Activated B cell treated with CpG ODN at 0.5 μM for 24 hours (primary cell): ENCODE measurements at regions of chr14 and their contacts with region 1.

Region 1: DNA sequence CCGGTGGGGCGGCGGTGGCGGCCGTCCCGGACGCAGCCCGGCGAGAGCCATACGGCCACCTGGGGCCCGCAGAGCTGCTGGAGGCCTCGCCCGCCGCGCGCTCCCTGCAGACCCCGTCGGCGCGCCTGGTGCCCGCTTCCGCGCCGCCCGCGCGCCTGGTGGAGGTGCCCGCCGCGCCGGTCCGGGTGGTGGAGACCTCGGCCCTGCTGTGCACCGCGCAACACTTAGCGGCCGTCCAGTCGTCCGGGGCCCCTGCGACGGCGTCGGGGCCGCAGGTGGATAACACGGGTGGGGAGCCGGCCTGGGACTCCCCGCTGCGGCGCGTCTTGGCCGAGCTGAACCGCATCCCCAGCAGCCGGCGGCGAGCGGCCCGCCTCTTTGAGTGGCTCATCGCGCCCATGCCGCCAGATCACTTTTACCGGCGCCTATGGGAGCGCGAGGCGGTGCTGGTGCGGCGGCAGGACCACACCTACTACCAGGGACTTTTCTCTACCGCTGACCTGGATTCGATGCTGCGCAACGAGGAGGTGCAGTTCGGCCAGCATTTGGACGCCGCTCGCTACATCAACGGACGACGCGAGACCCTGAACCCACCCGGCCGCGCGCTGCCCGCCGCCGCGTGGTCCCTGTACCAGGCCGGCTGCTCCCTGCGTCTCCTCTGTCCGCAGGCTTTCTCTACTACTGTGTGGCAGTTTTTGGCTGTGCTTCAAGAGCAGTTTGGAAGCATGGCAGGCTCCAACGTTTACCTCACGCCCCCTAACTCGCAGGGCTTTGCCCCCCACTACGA is 716 bp downstream of the RIOX1 start:
- DNase-seq: no peak
- ATAC-seq: peak; percentile 51
- H3K4me3 Mint-ChIP-seq: peak overlapping the region; percentile 88
- H3K27ac Mint-ChIP-seq: peak overlapping the region; percentile 80
- H3K4me1 Mint-ChIP-seq: peaks cover 49% of the 10 kb centered on the region
- H3K27me3 Mint-ChIP-seq: no peaks in the 10 kb centered on the region
- CTCF ChIP-seq: no peak

Region 2: DNA sequence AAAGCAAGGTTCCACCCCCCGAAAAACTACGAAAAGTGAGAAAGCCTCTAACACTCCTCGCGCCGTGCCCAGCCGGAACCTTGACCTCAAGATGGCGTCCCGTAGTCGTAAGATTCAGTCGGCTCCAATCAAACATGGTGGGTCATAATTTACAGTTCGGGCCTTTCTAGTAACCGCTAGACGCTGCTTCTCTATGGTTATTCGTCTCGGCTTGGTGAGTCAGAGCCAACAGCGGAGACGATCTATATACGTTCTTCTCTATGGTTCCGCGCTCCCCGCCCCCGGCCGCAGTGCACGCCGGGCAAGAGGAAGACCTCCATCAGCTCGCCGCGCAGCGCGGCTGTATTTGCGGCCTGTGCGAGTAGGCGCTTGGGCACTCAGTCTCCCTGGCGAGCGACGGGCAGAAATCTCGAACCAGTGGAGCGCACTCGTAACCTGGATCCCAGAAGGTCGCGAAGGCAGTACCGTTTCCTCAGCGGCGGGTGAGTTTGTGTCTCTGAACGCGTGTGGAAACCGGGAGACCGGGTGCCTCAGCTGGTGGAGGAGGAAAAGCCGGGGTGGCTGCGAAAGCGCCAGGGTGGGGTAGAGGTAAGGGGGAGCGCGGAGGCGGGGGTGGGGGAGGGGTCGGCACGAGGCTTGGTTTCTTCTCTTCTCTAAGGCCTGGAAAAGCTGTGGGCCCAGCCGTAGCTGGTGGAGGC is 433.1 kb before region 1 on chr14 and contains the start of gene RBM25:
- CTCF ChIA-PET with region 1: no interaction called
- POLR2A ChIA-PET with region 1: interaction called, 9 read pairs
- intact Hi-C with region 1: loop called (anchors 2 kb)
- DNase-seq: peak; percentile 90
- ATAC-seq: peak; percentile 93
- H3K4me3 Mint-ChIP-seq: no peak within 1 kb of the TSS
- H3K27ac Mint-ChIP-seq: no peak within 1 kb of the TSS
- H3K4me1 Mint-ChIP-seq: peaks cover 42% of the 10 kb centered on the region
- H3K27me3 Mint-ChIP-seq: no peaks in the 10 kb centered on the region
- CTCF ChIP-seq: no peak
- total RNA-seq, gene RBM25: 114 and 123 TPM in 2 replicates

Region 3: DNA sequence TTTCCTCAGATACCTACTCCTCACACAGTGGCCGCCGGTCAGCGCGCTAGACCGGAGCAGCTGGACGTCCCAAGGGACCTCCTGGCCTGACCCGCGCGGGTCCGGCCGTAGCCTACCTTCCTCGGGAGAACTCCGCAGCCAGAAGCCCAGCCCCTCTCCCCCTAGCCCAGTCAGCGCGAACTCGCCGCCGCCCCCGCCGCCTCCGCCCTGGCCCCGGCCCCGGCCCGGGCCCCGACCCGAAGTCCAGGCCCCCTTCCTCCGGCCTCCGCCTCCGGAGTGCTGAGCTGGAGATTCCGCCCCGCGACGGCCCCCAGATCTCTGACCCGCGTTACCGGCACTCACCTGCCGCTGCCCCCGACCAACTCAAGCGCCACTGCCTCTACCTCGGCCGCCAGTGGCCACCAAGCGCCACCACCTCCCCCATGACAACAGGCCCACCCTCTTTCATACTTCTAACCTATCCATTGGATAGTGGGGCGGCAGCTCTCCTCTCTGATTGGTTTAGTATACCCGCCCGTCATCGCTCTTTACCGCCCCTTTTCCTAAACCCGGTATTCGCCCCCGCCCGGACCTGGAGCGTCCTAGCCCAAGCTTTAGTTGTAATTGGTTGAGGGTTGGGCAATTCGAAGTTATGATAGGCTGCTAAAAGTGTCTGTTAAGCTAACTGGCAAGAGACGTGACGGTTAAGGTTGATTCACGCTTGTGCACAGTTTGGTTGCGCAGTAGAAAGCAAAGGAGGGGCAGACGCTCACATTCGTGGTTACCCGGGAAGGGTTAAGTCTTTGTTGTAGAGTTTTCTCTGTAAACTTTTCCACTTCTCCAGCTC is 33.1 kb before region 1 on chr14 and contains the start of gene NUMB:
- CTCF ChIA-PET with region 1: interaction called, 3 read pairs
- POLR2A ChIA-PET with region 1: interaction called, 9 read pairs
- intact Hi-C with region 1: loop called (anchors 1 kb)
- DNase-seq: peak; percentile 74
- ATAC-seq: peak; percentile 97
- H3K4me3 Mint-ChIP-seq: peak within 1 kb of the TSS; percentile 96
- H3K27ac Mint-ChIP-seq: peak within 1 kb of the TSS; percentile 92
- H3K4me1 Mint-ChIP-seq: peaks cover 52% of the 10 kb centered on the region
- H3K27me3 Mint-ChIP-seq: no peaks in the 10 kb centered on the region
- CTCF ChIP-seq: no peak
- total RNA-seq, gene NUMB: 69.5 and 71.4 TPM in 2 replicates

Region 4: GRCh38 chr14:73568381-73568781 is 76.9 kb after region 1 on chr14:
- CTCF ChIA-PET with region 1: interaction called, 4 read pairs
- POLR2A ChIA-PET with region 1: interaction called, 16 read pairs
- intact Hi-C with region 1: loop called (anchors 5 kb)
- DNase-seq: no peak
- ATAC-seq: no peak
- H3K4me3 Mint-ChIP-seq: peak overlapping the region; percentile 94
- H3K27ac Mint-ChIP-seq: peak overlapping the region; percentile 95
- H3K4me1 Mint-ChIP-seq: peaks cover 36% of the 10 kb centered on the region
- H3K27me3 Mint-ChIP-seq: no peaks in the 10 kb centered on the region
- CTCF ChIP-seq: no peak

Region 5: GRCh38 chr14:73633116-73634010 is 141.9 kb after region 1 on chr14:
- CTCF ChIA-PET with region 1: no interaction called
- POLR2A ChIA-PET with region 1: no interaction called
- intact Hi-C with region 1: loop called (anchors 1 kb)
- DNase-seq: peak; percentile 52
- ATAC-seq: peak; percentile 83
- H3K4me3 Mint-ChIP-seq: peak overlapping the region; percentile 83
- H3K27ac Mint-ChIP-seq: peak overlapping the region; percentile 12
- H3K4me1 Mint-ChIP-seq: peaks cover 4% of the 10 kb centered on the region
- H3K27me3 Mint-ChIP-seq: peaks cover 11% of the 10 kb centered on the region
- CTCF ChIP-seq: no peak

Region 6: DNA sequence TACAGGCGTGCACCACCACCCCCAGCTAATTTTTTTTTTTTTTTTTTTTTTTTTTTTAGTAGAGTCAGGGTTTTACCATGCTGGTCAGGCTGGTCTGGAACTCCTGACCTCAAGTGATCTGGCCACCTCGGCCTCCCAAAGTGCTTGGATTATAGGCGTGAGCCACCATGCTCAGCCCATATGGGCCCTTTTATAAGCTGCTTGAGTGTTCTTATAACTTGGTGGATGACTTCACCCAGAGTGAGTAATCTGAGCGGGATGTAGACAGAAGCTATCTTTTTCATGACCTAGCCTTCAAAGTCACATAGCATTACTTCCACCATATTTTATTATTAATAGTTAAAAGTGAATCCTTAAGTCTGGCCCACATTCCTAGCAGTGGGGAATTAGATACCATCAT is 544.1 kb after region 1 on chr14:
- CTCF ChIA-PET with region 1: no interaction called
- POLR2A ChIA-PET with region 1: no interaction called
- intact Hi-C with region 1: no loop called
- DNase-seq: no peak
- ATAC-seq: no peak
- H3K4me3 Mint-ChIP-seq: no peak overlapping the region
- H3K27ac Mint-ChIP-seq: no peak overlapping the region
- H3K4me1 Mint-ChIP-seq: no peaks in the 10 kb centered on the region
- H3K27me3 Mint-ChIP-seq: no peaks in the 10 kb centered on the region
- CTCF ChIP-seq: no peak